MCF 10A (cell line): ENCODE measurements at regions of chr17 and their contacts with region 1.

Region 1: DNA sequence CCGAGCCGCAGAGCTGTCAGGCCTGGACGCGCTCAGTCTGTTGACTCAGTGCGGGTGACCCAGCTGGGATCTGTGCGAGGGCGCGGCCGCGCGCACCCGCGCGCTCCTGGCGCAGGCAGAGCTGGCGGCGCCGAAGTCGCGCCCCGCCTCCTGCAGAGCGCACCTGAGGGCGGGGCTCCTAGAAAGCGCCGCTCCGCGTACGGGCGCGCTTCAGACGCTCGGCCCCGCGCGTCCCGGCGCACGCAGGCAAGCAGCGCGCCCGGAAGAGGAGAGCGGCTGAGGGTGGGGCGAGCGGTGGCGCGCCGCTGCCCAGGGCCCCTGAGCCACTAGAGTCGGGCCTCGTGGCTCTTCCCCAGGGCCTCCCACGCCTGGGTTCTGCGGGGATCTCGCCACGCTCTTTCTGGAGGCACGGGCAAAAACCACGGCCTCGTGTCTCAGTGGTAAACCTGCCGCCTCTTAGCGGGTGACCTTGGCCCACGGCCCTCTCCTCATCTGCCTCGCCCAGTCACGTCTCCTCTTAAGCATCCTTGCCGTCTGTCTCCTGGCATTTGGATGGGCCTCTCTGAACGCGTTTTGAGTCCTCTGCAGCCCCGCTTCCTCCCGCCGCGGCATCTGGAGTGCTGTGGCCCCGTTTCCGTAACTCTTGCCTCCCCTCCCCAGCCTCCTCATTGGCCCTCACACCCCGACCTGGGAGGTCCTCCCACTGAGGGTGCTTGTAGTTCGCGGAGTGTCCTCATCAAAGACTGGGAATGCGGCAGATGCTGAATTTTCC is at the start of gene ABCA5:
- DNase-seq: peak; percentile 93
- H3K4me3 Mint-ChIP-seq: peak within 1 kb of the TSS; percentile 99
- H3K27ac Mint-ChIP-seq: peak within 1 kb of the TSS; percentile 99
- H3K4me1 Mint-ChIP-seq: peaks cover 12% of the 10 kb centered on the region
- H3K27me3 Mint-ChIP-seq: no peaks in the 10 kb centered on the region
- CTCF ChIP-seq: no peak
- total RNA-seq, gene ABCA5: 7.6 and 9.6 TPM in 2 replicates

Region 2: GRCh38 chr17:68627956-68628575 is 699.2 kb before region 1 on chr17:
- CTCF ChIA-PET with region 1: no interaction called
- POLR2A ChIA-PET with region 1: no interaction called
- intact Hi-C with region 1: no loop called
- DNase-seq: no peak
- H3K4me3 Mint-ChIP-seq: no peak overlapping the region
- H3K27ac Mint-ChIP-seq: no peak overlapping the region
- H3K4me1 Mint-ChIP-seq: peaks cover 6% of the 10 kb centered on the region
- H3K27me3 Mint-ChIP-seq: no peaks in the 10 kb centered on the region
- CTCF ChIP-seq: no peak

Region 3: GRCh38 chr17:69164206-69164605 is 163.0 kb before region 1 on chr17:
- CTCF ChIA-PET with region 1: no interaction called
- POLR2A ChIA-PET with region 1: no interaction called
- intact Hi-C with region 1: no loop called
- DNase-seq: no peak
- H3K4me3 Mint-ChIP-seq: no peak overlapping the region
- H3K27ac Mint-ChIP-seq: no peak overlapping the region
- H3K4me1 Mint-ChIP-seq: no peaks in the 10 kb centered on the region
- H3K27me3 Mint-ChIP-seq: no peaks in the 10 kb centered on the region
- CTCF ChIP-seq: no peak

Region 4: GRCh38 chr17:69269131-69269998 is 57.9 kb before region 1 on chr17:
- CTCF ChIA-PET with region 1: interaction called, 4 read pairs
- POLR2A ChIA-PET with region 1: interaction called, 12 read pairs
- intact Hi-C with region 1: loop called (anchors 1 kb)
- DNase-seq: peak; percentile 90
- H3K4me3 Mint-ChIP-seq: peak overlapping the region; percentile 15
- H3K27ac Mint-ChIP-seq: peak overlapping the region; percentile 1
- H3K4me1 Mint-ChIP-seq: peaks cover 18% of the 10 kb centered on the region
- H3K27me3 Mint-ChIP-seq: no peaks in the 10 kb centered on the region
- CTCF ChIP-seq: no peak

Region 5: DNA sequence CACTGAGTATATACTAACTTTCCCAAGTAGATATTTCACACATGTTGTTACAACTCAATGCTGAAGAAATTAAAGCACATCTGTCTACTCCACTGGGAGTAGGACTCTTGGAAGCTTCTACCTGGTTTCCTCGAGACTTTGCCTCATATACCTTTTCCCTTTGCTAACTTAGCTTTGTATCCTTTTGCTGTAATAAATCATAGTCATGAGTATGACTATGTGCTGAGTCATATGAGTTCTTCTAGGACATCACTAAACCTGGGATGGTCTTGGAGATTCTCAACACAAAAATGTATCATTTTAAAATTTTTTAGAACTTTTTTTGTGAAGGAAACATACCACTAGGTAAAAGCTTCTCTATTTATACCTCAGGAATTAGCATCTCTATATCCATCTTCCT is 40.1 kb before region 1 on chr17:
- CTCF ChIA-PET with region 1: no interaction called
- POLR2A ChIA-PET with region 1: interaction called, 15 read pairs
- intact Hi-C with region 1: no loop called
- DNase-seq: peak; percentile 52
- H3K4me3 Mint-ChIP-seq: no peak overlapping the region
- H3K27ac Mint-ChIP-seq: no peak overlapping the region
- H3K4me1 Mint-ChIP-seq: peaks cover 10% of the 10 kb centered on the region
- H3K27me3 Mint-ChIP-seq: no peaks in the 10 kb centered on the region
- CTCF ChIP-seq: no peak

Region 6: DNA sequence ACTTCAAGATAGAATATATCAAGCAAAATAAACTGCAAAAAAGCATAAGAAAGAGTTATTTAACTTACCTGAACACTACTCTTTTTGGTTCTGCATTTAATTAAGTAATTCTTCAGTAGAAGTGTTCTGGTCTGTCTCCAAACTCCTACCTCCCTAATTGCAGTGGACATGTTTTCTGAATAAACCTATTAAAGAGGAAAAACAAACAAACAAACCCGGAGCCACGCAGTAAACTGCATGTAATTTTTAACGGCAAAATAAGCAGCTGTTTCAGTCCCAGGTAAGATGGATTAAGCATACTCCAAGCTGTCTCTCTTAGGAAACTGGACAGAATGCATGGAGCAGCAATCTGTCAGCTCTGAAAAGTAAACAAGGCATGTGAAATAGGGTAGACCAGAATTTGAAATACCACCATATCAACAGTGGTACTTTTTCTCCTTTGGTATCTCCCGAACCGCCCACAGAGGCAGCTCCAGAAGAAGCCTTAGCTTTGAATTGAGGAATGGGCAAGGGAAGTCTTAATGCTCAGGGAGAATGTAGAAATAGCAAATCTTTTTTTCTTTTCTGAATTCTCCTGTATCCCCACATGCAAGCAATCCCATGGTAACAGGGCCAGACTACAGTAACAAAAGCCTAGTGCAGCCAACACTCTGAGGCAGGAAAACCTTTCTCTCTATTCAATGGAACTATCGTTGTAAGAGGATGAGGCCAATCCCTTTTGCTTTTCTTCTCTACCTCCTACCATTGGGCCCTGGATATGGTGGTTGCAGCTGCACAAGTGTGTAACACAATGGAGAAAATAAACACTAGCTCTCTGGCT is 12.8 kb before region 1 on chr17:
- CTCF ChIA-PET with region 1: interaction called, 3 read pairs
- POLR2A ChIA-PET with region 1: interaction called, 45 read pairs
- intact Hi-C with region 1: no loop called
- DNase-seq: no peak
- H3K4me3 Mint-ChIP-seq: no peak overlapping the region
- H3K27ac Mint-ChIP-seq: no peak overlapping the region
- H3K4me1 Mint-ChIP-seq: no peaks in the 10 kb centered on the region
- H3K27me3 Mint-ChIP-seq: no peaks in the 10 kb centered on the region
- CTCF ChIP-seq: no peak

Region 7: GRCh38 chr17:69414408-69415274 is 87.4 kb after region 1 on chr17 and contains the start of gene MAP2K6:
- CTCF ChIA-PET with region 1: no interaction called
- POLR2A ChIA-PET with region 1: interaction called, 19 read pairs
- intact Hi-C with region 1: no loop called
- DNase-seq: peak; percentile 64
- H3K4me3 Mint-ChIP-seq: no peak within 1 kb of the TSS
- H3K27ac Mint-ChIP-seq: no peak within 1 kb of the TSS
- H3K4me1 Mint-ChIP-seq: peaks cover 17% of the 10 kb centered on the region
- H3K27me3 Mint-ChIP-seq: no peaks in the 10 kb centered on the region
- CTCF ChIP-seq: no peak
- total RNA-seq, gene MAP2K6: 0.28 and 0.37 TPM in 2 replicates

Region 8: DNA sequence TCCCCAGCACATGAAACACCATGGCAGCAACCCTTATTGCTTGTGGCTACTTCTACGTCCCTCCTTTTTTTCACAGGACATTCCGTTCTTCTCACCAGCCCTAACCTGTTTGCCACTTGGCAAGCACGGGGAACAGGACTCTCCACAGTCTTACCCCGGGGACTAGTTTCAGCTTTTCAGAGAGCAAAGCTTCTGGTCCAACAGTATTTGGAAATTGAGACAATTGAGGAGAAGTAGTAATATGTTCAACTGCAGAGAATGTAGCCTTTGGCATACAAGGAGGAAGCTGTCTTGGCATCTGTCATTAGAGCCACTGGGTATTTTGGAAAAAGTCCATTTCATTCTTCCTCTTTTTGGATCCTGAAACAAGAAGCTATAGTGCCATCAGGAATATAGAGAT is 153.0 kb after region 1 on chr17:
- CTCF ChIA-PET with region 1: no interaction called
- POLR2A ChIA-PET with region 1: interaction called, 10 read pairs
- intact Hi-C with region 1: no loop called
- DNase-seq: peak; percentile 68
- H3K4me3 Mint-ChIP-seq: peak overlapping the region; percentile 49
- H3K27ac Mint-ChIP-seq: peak overlapping the region; percentile 94
- H3K4me1 Mint-ChIP-seq: peaks cover 20% of the 10 kb centered on the region
- H3K27me3 Mint-ChIP-seq: no peaks in the 10 kb centered on the region
- CTCF ChIP-seq: no peak